Activated CD4-positive, alpha-beta T cell treated with anti-CD3 and anti-CD28 coated beads, Interleukin-2, amount 10 ng/mL, durations not matched to agents 24 days and 14 days (primary cell): ENCODE measurements at regions of chr4 and their contacts with region 1.

Region 1: DNA sequence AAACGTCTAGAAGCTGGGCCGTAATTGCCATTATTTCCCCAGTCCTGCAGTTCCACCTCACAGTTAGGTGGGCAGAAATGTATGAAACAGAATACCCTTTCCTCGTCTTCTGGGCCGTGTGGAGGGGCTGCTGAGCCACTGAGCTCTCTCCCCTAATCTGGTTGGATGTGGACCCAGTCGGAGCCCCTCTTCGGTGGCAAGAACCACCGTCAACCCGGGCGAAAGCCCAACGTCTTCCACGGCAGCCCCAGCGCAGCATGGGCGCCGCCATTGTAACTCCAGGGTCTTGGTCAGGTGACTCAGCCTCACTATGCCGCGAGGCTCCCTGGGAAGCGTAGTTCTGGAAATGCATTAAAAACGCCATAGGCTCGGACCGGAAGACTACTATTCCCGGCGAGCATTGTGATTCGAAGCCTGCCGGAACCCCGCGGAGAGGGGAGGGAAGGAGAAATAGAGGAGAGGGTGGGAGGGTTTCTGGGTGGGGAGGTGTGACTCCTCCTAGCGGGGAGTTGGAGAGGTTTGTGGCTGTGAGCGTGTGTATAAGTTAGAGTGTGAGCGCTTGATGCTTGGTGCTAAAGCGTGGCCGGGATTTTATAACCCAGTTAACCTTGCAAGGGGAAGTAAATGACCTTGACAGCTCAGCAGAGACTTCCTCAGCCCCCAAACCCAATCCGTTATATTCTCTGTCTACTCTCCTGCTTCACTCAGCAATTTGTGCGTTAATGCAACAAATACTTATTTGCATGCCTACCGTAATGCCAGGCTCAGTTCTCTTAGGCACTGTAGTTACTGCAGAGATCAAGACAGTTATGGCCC is at the start of gene GATB:
- DNase-seq: peak; percentile 97
- H3K4me3 Mint-ChIP-seq: peak within 1 kb of the TSS; percentile 93
- H3K27ac Mint-ChIP-seq: peak within 1 kb of the TSS; percentile 95
- H3K4me1 Mint-ChIP-seq: peaks cover 15% of the 10 kb centered on the region
- H3K27me3 Mint-ChIP-seq: peaks cover 7% of the 10 kb centered on the region
- total RNA-seq, gene GATB: 15.7 and 20.2 TPM in 2 replicates

Region 2: DNA sequence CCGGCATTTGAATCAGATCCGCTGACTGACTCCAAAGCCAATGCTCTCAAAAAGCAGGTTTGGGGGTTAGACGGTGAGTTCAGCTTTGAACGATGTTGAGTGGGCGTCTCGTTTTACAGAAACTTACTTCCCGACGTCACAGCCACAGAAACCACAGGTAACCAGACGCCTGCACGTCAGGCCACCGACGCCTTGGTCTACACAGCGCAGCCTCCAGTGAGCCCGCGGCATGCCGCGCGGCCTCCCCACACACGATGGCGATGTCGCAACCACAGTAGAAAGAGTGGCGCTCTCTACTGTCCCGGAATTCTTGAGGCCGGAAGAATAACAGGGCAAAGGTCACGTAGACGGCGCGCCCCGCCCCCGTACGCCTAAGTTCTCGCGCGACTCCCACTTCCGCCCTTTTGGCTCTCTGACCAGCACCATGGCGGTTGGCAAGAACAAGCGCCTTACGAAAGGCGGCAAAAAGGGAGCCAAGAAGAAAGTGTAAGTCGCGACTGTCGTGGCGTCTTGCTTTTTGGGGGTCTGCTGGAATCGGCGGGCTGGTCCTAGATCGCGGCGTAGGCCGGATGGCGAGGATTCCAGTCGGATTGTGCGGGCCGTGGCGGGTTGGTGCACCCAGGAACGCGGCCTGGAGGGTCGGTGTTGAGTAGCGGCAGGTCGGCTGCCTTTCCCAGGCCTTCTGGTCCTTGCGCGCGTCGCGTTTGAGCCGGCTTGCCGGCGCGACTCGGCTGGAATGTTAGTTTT is 661.5 kb before region 1 on chr4 and contains the start of gene RPS3A:
- intact Hi-C with region 1: loop called (anchors 1 kb)
- DNase-seq: peak; percentile 100
- H3K4me3 Mint-ChIP-seq: peak within 1 kb of the TSS; percentile 98
- H3K27ac Mint-ChIP-seq: peak within 1 kb of the TSS; percentile 98
- H3K4me1 Mint-ChIP-seq: peaks cover 48% of the 10 kb centered on the region
- H3K27me3 Mint-ChIP-seq: peaks cover 4% of the 10 kb centered on the region
- total RNA-seq, gene RPS3A: 1,850 and 1,855 TPM in 2 replicates

Region 3: GRCh38 chr4:151362404-151363164 is 398.3 kb before region 1 on chr4:
- intact Hi-C with region 1: loop called (anchors 1 kb)
- DNase-seq: peak; percentile 92
- H3K4me3 Mint-ChIP-seq: no peak overlapping the region
- H3K27ac Mint-ChIP-seq: no peak overlapping the region
- H3K4me1 Mint-ChIP-seq: peaks cover 2% of the 10 kb centered on the region
- H3K27me3 Mint-ChIP-seq: peaks cover 13% of the 10 kb centered on the region

Region 4: GRCh38 chr4:151887031-151887815 is 126.3 kb after region 1 on chr4:
- intact Hi-C with region 1: loop called (anchors 1 kb)
- DNase-seq: no peak
- H3K4me3 Mint-ChIP-seq: no peak overlapping the region
- H3K27ac Mint-ChIP-seq: peak overlapping the region; percentile 57
- H3K4me1 Mint-ChIP-seq: peaks cover 28% of the 10 kb centered on the region
- H3K27me3 Mint-ChIP-seq: no peaks in the 10 kb centered on the region

Region 5: DNA sequence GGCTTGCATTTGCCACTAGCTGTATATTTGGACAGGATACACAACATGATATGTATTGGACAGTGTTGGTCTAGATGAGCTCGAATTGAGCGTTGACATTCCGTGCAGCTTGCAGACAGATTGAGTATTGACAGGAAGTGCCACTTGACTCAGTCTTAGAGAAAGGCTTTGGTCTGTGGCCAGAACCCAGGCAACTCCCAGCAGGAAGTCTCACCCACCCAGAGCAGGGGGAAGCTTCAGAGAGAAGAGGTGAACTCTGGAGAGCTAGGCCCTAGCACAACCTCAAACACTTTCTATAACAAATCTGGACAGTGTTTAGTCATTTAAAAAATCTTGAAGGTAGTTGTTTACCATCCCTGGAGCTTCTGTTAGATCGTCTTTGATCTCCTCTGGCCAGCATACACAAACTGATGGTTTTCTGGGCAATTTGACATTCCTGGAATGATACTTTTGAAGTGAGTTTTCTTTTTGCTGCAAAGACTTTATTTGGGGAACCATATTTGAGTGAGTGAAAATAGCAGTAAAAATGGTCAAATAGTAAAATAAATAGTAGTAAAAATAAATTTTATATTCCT is 494.6 kb after region 1 on chr4:
- intact Hi-C with region 1: loop called (anchors 5 kb)
- DNase-seq: peak; percentile 90
- H3K4me3 Mint-ChIP-seq: no peak overlapping the region
- H3K27ac Mint-ChIP-seq: no peak overlapping the region
- H3K4me1 Mint-ChIP-seq: peaks cover 14% of the 10 kb centered on the region
- H3K27me3 Mint-ChIP-seq: no peaks in the 10 kb centered on the region

Region 6: DNA sequence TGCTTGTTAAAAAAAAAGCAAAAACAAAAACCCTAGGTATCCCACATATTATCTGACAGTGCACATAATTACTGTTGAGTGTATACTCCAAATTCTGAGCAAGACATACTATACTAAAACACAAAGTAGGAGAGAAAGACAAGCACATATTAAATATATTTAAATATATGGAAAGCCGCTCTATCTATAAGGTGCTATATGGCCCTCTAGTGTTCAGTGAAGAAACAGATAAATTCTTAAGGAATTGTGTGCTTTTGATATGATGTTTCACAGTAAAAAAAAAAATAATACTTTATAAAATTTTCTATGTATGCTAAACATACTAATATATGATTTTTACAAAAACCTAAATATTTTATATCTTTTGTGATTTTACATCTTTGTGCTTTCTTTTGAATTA is 637.1 kb after region 1 on chr4:
- intact Hi-C with region 1: loop called (anchors 5 kb)
- DNase-seq: no peak
- H3K4me3 Mint-ChIP-seq: no peak overlapping the region
- H3K27ac Mint-ChIP-seq: no peak overlapping the region
- H3K4me1 Mint-ChIP-seq: peaks cover 44% of the 10 kb centered on the region
- H3K27me3 Mint-ChIP-seq: no peaks in the 10 kb centered on the region